ENCODE measurements at regions of chr20 and their contacts with region 1.

Region 1: DNA sequence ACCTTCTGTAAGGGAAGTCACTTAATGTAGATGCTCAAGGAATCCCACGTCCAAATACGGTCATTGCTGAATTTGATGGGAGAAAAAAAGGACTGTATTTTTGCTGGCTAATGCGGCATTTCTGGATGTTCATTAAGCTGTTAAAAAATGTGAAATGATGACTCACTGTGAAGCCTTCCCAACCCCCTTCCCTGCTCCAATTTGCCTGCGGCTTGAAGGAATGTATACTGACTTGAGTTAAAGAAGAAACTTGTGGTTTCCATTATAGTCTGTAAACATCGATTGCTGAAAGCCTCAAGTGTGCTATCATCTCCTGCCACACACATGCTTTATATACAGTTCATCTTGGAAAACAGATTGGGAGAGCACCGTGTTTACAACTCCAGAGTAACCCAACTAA is 249.1 kb upstream of the JAG1 start:
- DNase-seq: no peak
- H3K4me3 ChIP-seq: no peak overlapping the region
- H3K27ac ChIP-seq: peak overlapping the region in 1 of 2 donors; percentile 31
- H3K4me1 ChIP-seq: peaks cover 0 to 16% of the 10 kb centered on the region in 2 donors
- H3K27me3 ChIP-seq: no peaks in the 10 kb centered on the region
- CTCF ChIP-seq: no peak

Region 2: GRCh38 chr20:10982692-10983091 is 59.8 kb after region 1 on chr20:
- intact Hi-C with region 1: loop called (anchors 5 kb)
- DNase-seq: peak; percentile 11 to 83
- H3K4me3 ChIP-seq: peak overlapping the region in 1 of 2 donors; percentile 17
- H3K27ac ChIP-seq: peak overlapping the region; percentile 52 to 58
- H3K4me1 ChIP-seq: peaks cover 0 to 17% of the 10 kb centered on the region in 2 donors
- H3K27me3 ChIP-seq: no peaks in the 10 kb centered on the region
- CTCF ChIP-seq: no peak

Region 3: GRCh38 chr20:11204926-11205768 is 282.2 kb after region 1 on chr20:
- intact Hi-C with region 1: loop called (anchors 5 kb)
- DNase-seq: peak in 1 of 2 donors; percentile 68
- H3K4me3 ChIP-seq: no peak overlapping the region
- H3K27ac ChIP-seq: peak overlapping the region; percentile 3 to 38
- H3K4me1 ChIP-seq: peaks cover 0 to 10% of the 10 kb centered on the region in 2 donors
- H3K27me3 ChIP-seq: no peaks in the 10 kb centered on the region
- CTCF ChIP-seq: peak; percentile 59 to 72 (median 59)

Region 4: GRCh38 chr20:11216451-11217314 is 293.7 kb after region 1 on chr20:
- intact Hi-C with region 1: no loop called
- DNase-seq: no peak
- H3K4me3 ChIP-seq: no peak overlapping the region
- H3K27ac ChIP-seq: peak overlapping the region; percentile 31 to 49
- H3K4me1 ChIP-seq: peaks cover 0 to 21% of the 10 kb centered on the region in 2 donors
- H3K27me3 ChIP-seq: no peaks in the 10 kb centered on the region
- CTCF ChIP-seq: no peak

Region 5: GRCh38 chr20:11267131-11267761 is 344.3 kb after region 1 on chr20:
- intact Hi-C with region 1: loop called (anchors 5 kb)
- DNase-seq: peak in 1 of 2 donors; percentile 70
- H3K4me3 ChIP-seq: no peak overlapping the region
- H3K27ac ChIP-seq: peak overlapping the region in 1 of 2 donors; percentile 33
- H3K4me1 ChIP-seq: peaks cover 0 to 17% of the 10 kb centered on the region in 2 donors
- H3K27me3 ChIP-seq: no peaks in the 10 kb centered on the region
- CTCF ChIP-seq: peak in 1 of 3 experiments; percentile 12

Measured in ascending aorta (tissue), 2 donors.